Heart left ventricle (tissue), 16 donors: ENCODE measurements at regions of chr2 and their contacts with region 1.

Region 1: DNA sequence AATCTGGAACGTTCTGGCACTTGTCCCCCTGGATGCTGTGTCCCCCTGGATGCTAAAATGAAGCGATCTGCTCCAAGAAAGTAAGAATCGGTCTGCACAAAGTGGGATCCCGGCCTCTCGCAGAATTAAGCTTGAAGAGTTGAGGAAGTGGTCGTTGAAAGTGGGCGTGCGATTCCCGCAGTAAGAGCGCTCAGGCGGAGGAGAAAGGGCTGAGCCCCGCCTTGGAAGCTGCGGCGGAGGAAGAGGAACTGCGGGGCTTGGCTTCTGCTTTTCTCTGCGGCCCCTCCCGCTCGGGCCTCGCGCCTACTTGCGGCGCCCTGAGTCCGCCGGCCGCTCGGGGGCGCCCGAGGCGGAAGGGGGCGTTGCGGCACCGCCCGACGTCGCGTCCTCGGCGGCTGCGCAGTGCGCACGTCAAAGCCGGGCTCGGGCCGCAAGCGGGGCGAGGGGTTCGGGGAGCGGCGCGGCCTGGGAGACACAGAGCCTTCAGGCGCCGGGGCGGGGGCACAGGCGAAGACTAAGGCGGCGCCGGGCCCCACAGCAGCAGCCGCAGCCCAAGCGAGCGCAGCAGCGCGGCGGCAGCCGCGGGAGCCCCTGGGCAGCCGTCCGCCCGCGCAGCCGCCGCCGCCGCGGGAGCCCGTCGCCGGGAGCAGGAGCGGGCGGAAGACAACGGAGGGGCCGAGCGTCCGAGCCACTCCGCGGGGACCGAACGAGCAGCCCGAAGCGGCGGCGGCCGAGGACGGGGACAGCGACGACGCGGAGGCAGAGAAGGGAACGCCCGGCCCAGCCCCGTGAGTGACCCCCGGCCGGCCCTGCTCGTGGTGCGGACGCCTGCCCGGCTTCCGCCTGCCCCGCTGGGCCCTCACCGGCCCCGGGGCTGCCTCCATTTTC is at the start of gene CAB39:
- DNase-seq: peak; percentile 88 to 94 (median 90)
- ATAC-seq: peak; percentile 79 to 95 (median 93)
- H3K4me3 ChIP-seq: peak within 1 kb of the TSS; percentile 83 to 100 (median 98)
- H3K27ac ChIP-seq: peak within 1 kb of the TSS; percentile 81 to 97 (median 93)
- H3K4me1 ChIP-seq: peaks cover 0 to 47% (median 29%) of the 10 kb centered on the region in 12 donors
- H3K27me3 ChIP-seq: no peaks in the 10 kb centered on the region
- CTCF ChIP-seq: peak; percentile 75 to 99 (median 90)
- POLR2A ChIP-seq: peak in 1 of 2 donors; percentile 83
- total RNA-seq, gene CAB39: 64.3 to 99.2 (median 84.8) TPM

Region 2: DNA sequence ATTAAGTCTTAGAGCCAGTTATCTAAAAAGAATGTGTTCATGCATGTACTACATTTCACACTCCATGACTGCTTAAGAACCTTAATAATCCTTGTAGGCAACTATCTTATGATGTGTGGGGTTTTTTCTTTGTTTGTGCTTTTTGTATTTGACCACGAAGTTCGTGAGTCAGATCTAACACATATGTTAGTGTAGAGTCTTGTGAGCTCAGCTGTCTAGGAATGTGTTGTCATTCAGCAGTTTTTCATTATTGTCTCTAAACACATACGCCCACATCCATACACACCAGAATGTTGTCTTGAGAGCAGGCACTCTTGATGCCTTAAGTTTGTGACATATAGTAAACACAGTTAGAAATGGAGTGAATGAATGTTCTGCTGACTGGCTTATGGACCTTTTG is 38.4 kb after region 1 on chr2:
- intact Hi-C with region 1: loop called in 2 of 10 experiments (anchors 5 kb)
- DNase-seq: no peak
- ATAC-seq: peak in 2 of 4 donors; percentile 9 to 31
- H3K4me3 ChIP-seq: no peak overlapping the region
- H3K27ac ChIP-seq: no peak overlapping the region
- H3K4me1 ChIP-seq: peaks cover 0 to 47% (median 24%) of the 10 kb centered on the region in 12 donors
- H3K27me3 ChIP-seq: no peaks in the 10 kb centered on the region
- CTCF ChIP-seq: no peak
- POLR2A ChIP-seq: no peak

Region 3: GRCh38 chr2:230758566-230759480 is 46.1 kb after region 1 on chr2:
- intact Hi-C with region 1: loop called in 1 of 10 experiments (anchors 5 kb)
- DNase-seq: no peak
- ATAC-seq: peak in 2 of 4 donors; percentile 17 to 53
- H3K4me3 ChIP-seq: no peak overlapping the region
- H3K27ac ChIP-seq: peak overlapping the region in 4 of 12 donors; percentile 46 to 77 (median 74)
- H3K4me1 ChIP-seq: peaks cover 0 to 53% (median 34%) of the 10 kb centered on the region in 12 donors
- H3K27me3 ChIP-seq: no peaks in the 10 kb centered on the region
- CTCF ChIP-seq: no peak
- POLR2A ChIP-seq: no peak

Region 4: GRCh38 chr2:230781130-230781797 is 68.6 kb after region 1 on chr2:
- intact Hi-C with region 1: loop called in 1 of 10 experiments (anchors 5 kb)
- DNase-seq: no peak
- ATAC-seq: peak; percentile 8 to 56 (median 44)
- H3K4me3 ChIP-seq: no peak overlapping the region
- H3K27ac ChIP-seq: peak overlapping the region in 7 of 12 donors; percentile 2 to 59 (median 42)
- H3K4me1 ChIP-seq: peaks cover 0 to 85% (median 28%) of the 10 kb centered on the region in 12 donors
- H3K27me3 ChIP-seq: no peaks in the 10 kb centered on the region
- CTCF ChIP-seq: no peak
- POLR2A ChIP-seq: no peak

Region 5: GRCh38 chr2:230798769-230799399 is 86.2 kb after region 1 on chr2:
- intact Hi-C with region 1: loop called (anchors 2 to 5 kb)
- DNase-seq: no peak
- ATAC-seq: no peak
- H3K4me3 ChIP-seq: no peak overlapping the region
- H3K27ac ChIP-seq: no peak overlapping the region
- H3K4me1 ChIP-seq: peaks cover 0 to 53% (median 20%) of the 10 kb centered on the region in 12 donors
- H3K27me3 ChIP-seq: no peaks in the 10 kb centered on the region
- CTCF ChIP-seq: peak; percentile 32 to 70 (median 60)
- POLR2A ChIP-seq: no peak

Region 6: GRCh38 chr2:230814616-230815015 is 101.9 kb after region 1 on chr2:
- intact Hi-C with region 1: no loop called
- DNase-seq: no peak
- ATAC-seq: no peak
- H3K4me3 ChIP-seq: no peak overlapping the region
- H3K27ac ChIP-seq: no peak overlapping the region
- H3K4me1 ChIP-seq: no peaks in the 10 kb centered on the region
- H3K27me3 ChIP-seq: no peaks in the 10 kb centered on the region
- CTCF ChIP-seq: peak in 8 of 12 donors; percentile 12 to 42 (median 28)
- POLR2A ChIP-seq: no peak

Region 7: DNA sequence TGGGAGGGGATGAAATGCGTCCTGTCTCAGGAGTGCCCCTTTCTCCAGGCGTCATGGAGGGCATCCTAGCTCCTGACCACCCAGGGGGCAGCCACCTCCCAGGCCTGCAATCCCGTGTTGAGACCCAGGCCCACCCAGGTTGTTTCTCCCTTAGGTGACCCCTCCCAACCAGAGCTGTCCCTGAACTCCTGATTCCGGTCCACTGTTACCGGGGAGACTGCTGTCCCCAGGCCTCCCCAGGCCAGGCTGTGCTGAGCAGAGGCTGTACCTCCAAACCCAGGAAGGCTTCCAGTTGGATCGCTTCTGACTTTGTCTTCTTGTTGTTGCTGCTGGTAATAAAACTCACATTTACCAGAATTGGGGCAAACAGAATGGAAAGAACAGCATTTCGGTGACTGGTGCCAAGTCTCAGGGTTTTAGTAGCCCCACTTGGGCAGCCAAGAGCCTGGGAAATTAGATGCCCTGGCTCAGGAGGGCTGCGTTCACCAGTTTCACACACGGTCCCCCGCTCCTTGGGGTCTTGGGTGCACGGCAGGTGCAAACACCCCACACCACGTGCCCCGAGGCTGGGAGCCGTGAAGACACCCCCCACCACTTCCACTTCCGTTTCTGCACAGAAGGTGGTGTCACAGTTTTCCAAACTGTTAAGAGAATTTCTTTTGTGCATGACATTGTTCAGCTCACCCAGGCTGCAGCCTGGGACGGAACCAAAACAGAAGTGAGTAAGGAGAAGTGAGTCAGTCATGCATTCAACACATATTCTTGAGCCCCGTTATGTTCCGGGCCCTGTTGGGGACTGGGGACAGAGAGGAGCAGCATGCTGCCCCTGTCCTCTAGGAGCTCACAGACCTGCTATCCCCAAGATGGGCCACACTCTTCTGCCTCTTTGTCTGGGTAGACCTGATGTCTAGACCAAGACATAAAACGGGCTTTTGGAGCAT is 181.4 kb after region 1 on chr2:
- intact Hi-C with region 1: no loop called
- DNase-seq: peak in 3 of 5 donors; percentile 14 to 20 (median 14)
- ATAC-seq: no peak
- H3K4me3 ChIP-seq: no peak overlapping the region
- H3K27ac ChIP-seq: no peak overlapping the region
- H3K4me1 ChIP-seq: peaks cover 0 to 4% (median 0%) of the 10 kb centered on the region in 12 donors
- H3K27me3 ChIP-seq: peaks cover 0 to 4% (median 0%) of the 10 kb centered on the region in 9 donors
- CTCF ChIP-seq: no peak
- POLR2A ChIP-seq: no peak